Activated CD4-positive, alpha-beta memory T cell treated with anti-CD3 and anti-CD28 coated beads for 36 hours (primary cell): ENCODE measurements at regions of chr5 and their contacts with region 1.

Region 1: GRCh38 chr5:119411935-119412602 is 40.2 kb upstream of the HSD17B4 start:
- DNase-seq: peak; percentile 55
- H3K4me3 Mint-ChIP-seq: peak overlapping the region; percentile 75
- H3K27ac Mint-ChIP-seq: peak overlapping the region; percentile 63
- H3K4me1 Mint-ChIP-seq: peaks cover 34% of the 10 kb centered on the region
- H3K27me3 Mint-ChIP-seq: no peaks in the 10 kb centered on the region

Region 2: GRCh38 chr5:119022017-119022745 is 389.9 kb before region 1 on chr5:
- CTCF ChIA-PET with region 1: interaction called, 40 read pairs
- POLR2A ChIA-PET with region 1: no interaction called
- intact Hi-C with region 1: loop called (anchors 1 kb)
- DNase-seq: no peak
- H3K4me3 Mint-ChIP-seq: no peak overlapping the region
- H3K27ac Mint-ChIP-seq: no peak overlapping the region
- H3K4me1 Mint-ChIP-seq: no peaks in the 10 kb centered on the region
- H3K27me3 Mint-ChIP-seq: no peaks in the 10 kb centered on the region

Region 3: GRCh38 chr5:119267958-119268386 is 144.1 kb before region 1 on chr5:
- CTCF ChIA-PET with region 1: interaction called, 23 read pairs
- POLR2A ChIA-PET with region 1: interaction called, 3 read pairs
- intact Hi-C with region 1: loop called (anchors 1 kb)
- DNase-seq: peak; percentile 91
- H3K4me3 Mint-ChIP-seq: peak overlapping the region; percentile 99
- H3K27ac Mint-ChIP-seq: peak overlapping the region; percentile 99
- H3K4me1 Mint-ChIP-seq: peaks cover 49% of the 10 kb centered on the region
- H3K27me3 Mint-ChIP-seq: no peaks in the 10 kb centered on the region

Region 4: DNA sequence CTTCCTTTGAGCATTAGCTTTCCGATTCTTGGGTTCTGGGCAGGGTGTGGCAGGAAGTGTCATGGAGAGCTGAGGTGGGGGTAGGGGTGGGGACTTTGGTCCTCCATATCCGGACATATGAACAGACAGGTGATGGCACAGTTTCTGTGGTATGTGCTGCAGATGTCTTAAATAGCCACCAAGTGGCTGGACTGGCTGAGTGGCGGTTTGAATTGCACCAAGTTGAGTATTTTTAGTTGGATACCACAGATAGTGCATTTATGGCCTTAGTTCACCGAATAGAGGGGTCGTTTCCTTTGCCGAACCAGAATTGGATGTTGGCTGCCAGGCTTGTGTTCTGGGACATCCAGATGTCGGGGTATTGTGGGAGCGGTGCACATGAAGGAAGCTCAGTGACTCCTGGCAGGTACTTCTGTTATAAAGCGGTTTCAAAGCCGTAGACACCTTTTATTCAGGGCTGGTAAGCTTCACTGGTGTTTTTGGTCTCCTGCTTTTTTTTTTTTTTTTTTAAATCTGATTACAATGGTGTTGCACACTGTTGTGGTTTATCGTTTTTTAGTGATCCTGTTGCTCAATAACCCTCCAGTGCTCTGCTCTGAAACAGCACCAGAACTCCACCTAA is 71.4 kb before region 1 on chr5:
- CTCF ChIA-PET with region 1: interaction called, 10 read pairs
- POLR2A ChIA-PET with region 1: interaction called, 3 read pairs
- intact Hi-C with region 1: no loop called
- DNase-seq: peak; percentile 78
- H3K4me3 Mint-ChIP-seq: peak overlapping the region; percentile 66
- H3K27ac Mint-ChIP-seq: peak overlapping the region; percentile 93
- H3K4me1 Mint-ChIP-seq: peaks cover 94% of the 10 kb centered on the region
- H3K27me3 Mint-ChIP-seq: no peaks in the 10 kb centered on the region

Region 5: DNA sequence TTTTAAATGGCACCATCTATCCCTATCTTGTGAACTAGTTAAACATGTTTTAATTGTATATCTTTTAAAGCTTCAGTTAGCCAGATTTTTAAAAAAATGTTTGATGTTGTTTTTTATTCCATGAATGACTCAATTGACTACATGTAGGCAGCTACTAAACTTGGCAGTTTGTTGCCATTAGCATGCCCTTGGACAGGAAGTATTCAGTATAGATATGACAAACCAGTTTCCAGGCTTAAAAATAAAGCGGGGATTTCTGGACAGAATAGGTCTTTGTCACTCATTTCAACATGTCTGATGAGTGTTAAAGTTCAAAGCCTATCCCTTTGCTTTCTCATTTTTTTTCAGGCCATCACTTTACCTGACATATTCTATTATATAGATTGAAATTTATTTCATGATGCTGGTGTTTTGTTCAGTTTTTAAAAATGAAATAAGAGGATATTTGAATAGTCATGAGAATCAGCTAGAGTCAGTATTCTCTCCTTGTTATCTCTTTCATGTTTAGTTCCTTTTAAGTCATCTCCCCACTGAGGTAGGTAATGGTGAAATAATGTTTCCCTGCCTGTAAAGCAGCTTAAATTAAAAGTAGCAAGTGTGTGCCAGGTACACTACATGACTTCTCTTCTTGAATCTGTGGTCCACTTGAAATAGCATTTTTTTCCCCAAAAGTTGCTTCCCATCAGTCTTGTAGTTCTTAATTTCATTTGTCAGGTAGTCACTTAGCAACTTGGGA is 44.4 kb before region 1 on chr5:
- CTCF ChIA-PET with region 1: interaction called, 16 read pairs
- POLR2A ChIA-PET with region 1: no interaction called
- intact Hi-C with region 1: loop called (anchors 1 kb)
- DNase-seq: no peak
- H3K4me3 Mint-ChIP-seq: peak overlapping the region; percentile 55
- H3K27ac Mint-ChIP-seq: peak overlapping the region; percentile 90
- H3K4me1 Mint-ChIP-seq: peaks cover 83% of the 10 kb centered on the region
- H3K27me3 Mint-ChIP-seq: no peaks in the 10 kb centered on the region

Region 6: DNA sequence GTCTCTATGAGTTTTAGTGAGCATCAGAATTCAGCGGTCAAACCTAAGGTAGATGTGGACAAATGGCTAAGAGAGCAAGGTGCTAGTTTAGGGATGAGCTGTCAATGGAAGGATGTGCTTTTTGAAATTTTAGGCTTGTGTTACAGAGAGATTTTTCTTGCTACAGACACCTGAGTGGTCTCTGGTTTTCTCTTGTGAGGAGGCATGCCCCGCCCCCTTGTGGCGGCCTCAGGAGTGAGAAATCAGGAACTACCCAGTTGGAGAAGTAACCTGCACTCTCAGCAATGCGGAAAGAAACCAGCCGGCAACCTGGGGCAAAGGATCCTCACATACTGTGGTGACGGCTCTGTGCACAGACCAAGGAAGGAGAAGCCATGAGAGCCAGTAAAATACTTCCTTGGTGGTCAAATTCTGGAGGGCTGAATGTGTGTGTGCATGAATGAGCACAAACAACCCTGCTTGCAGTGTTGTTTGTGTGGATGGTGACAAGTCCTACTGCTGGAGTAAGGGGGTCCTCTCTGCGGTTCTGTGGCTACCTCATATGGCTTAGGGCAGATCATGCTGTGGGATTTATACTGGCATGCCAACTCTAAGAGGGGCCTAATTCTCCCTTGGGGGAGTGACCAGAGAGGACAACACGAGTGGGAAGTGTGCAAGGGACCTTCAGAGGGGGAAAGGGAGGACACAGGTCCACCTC is 23.5 kb after region 1 on chr5:
- CTCF ChIA-PET with region 1: interaction called, 28 read pairs
- POLR2A ChIA-PET with region 1: no interaction called
- intact Hi-C with region 1: no loop called
- DNase-seq: peak; percentile 80
- H3K4me3 Mint-ChIP-seq: peak overlapping the region; percentile 3
- H3K27ac Mint-ChIP-seq: peak overlapping the region; percentile 4
- H3K4me1 Mint-ChIP-seq: peaks cover 7% of the 10 kb centered on the region
- H3K27me3 Mint-ChIP-seq: peaks cover 26% of the 10 kb centered on the region

Region 7: GRCh38 chr5:119527351-119527750 is 115.3 kb after region 1 on chr5:
- CTCF ChIA-PET with region 1: no interaction called
- POLR2A ChIA-PET with region 1: no interaction called
- intact Hi-C with region 1: no loop called
- DNase-seq: no peak
- H3K4me3 Mint-ChIP-seq: no peak overlapping the region
- H3K27ac Mint-ChIP-seq: no peak overlapping the region
- H3K4me1 Mint-ChIP-seq: no peaks in the 10 kb centered on the region
- H3K27me3 Mint-ChIP-seq: no peaks in the 10 kb centered on the region

Region 8: DNA sequence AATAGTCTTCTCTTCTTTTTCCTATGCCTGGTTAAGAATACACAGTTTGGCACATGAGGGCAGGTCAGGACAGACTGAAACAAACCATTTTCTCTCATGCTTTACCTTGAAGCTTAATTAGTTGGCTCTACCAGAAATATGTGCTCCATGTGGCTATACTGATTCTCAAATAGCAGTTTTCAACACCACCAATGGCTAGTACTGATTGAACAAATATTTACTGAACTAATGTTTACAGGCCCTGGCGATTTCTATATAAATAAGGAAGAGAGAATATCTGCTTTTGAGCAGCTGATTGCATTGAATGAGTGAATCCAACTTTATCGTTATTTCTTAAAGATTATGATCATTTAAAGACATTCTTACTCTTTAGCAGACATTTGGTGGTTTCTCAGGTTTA is 152.3 kb after region 1 on chr5:
- CTCF ChIA-PET with region 1: no interaction called
- POLR2A ChIA-PET with region 1: no interaction called
- intact Hi-C with region 1: no loop called
- DNase-seq: no peak
- H3K4me3 Mint-ChIP-seq: no peak overlapping the region
- H3K27ac Mint-ChIP-seq: no peak overlapping the region
- H3K4me1 Mint-ChIP-seq: no peaks in the 10 kb centered on the region
- H3K27me3 Mint-ChIP-seq: no peaks in the 10 kb centered on the region

Region 9: GRCh38 chr5:119655061-119655460 is 243.0 kb after region 1 on chr5:
- CTCF ChIA-PET with region 1: no interaction called
- POLR2A ChIA-PET with region 1: no interaction called
- intact Hi-C with region 1: no loop called
- DNase-seq: no peak
- H3K4me3 Mint-ChIP-seq: no peak overlapping the region
- H3K27ac Mint-ChIP-seq: no peak overlapping the region
- H3K4me1 Mint-ChIP-seq: no peaks in the 10 kb centered on the region
- H3K27me3 Mint-ChIP-seq: no peaks in the 10 kb centered on the region